Activated CD4-positive, alpha-beta T cell treated with anti-CD3 and anti-CD28 coated beads, Interleukin-2, amount 10 ng/mL, durations not matched to agents 24 days and 14 days (primary cell): ENCODE measurements at regions of chr2 and their contacts with region 1.

Region 1: DNA sequence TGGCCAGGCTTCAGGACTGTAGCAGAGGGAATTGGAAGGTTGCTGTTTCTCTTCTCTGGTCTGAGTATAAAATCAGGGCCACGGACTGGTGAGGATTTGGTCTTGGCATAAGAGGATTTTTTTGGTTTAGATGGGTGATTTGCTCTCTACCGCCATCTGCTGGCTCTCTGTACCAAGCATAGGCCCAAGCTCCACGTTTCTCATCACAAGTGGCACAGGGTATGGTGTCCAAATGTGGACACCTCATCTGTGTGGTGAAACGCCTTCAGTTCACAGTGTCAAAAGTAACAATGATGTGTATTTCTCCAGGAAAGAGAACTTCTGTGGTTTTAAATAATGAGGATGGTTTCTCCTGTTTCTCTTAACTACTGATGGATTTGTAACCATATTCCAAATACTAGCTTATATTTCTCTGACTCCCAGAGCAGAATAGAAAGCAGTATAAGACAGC is 115.1 kb downstream of the EML6 start:
- DNase-seq: peak; percentile 86
- H3K4me3 Mint-ChIP-seq: no peak overlapping the region
- H3K27ac Mint-ChIP-seq: no peak overlapping the region
- H3K4me1 Mint-ChIP-seq: no peaks in the 10 kb centered on the region
- H3K27me3 Mint-ChIP-seq: no peaks in the 10 kb centered on the region

Region 2: DNA sequence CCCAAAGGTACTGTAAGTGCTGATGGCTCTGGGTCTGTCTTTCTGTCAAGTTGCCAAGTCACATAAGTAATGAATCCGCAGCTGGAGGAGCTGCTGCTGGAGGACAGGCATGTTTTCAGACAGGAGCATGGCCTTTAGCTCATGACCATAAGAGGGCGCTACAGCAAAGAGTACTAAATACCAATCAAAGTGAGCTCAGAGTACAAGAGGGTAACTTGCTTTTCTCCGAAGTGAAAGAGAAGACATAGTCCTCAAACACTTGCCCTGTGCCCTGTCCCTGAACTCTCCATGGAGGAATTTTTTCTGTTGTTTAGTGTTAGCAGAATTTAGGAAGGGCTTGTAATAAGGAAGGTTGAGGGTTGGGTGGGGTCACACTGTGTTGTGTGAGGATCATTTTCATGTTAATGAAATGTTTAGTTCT is 173.2 kb before region 1 on chr2:
- intact Hi-C with region 1: loop called (anchors 2 kb)
- DNase-seq: peak; percentile 86
- H3K4me3 Mint-ChIP-seq: no peak overlapping the region
- H3K27ac Mint-ChIP-seq: no peak overlapping the region
- H3K4me1 Mint-ChIP-seq: peaks cover 15% of the 10 kb centered on the region
- H3K27me3 Mint-ChIP-seq: no peaks in the 10 kb centered on the region

Region 3: GRCh38 chr2:54763636-54764291 is 74.8 kb before region 1 on chr2:
- intact Hi-C with region 1: loop called (anchors 1 kb)
- DNase-seq: peak; percentile 63
- H3K4me3 Mint-ChIP-seq: no peak overlapping the region
- H3K27ac Mint-ChIP-seq: no peak overlapping the region
- H3K4me1 Mint-ChIP-seq: peaks cover 7% of the 10 kb centered on the region
- H3K27me3 Mint-ChIP-seq: peaks cover 11% of the 10 kb centered on the region